ENCODE measurements at regions of chr13 and their contacts with region 1.

Region 1: DNA sequence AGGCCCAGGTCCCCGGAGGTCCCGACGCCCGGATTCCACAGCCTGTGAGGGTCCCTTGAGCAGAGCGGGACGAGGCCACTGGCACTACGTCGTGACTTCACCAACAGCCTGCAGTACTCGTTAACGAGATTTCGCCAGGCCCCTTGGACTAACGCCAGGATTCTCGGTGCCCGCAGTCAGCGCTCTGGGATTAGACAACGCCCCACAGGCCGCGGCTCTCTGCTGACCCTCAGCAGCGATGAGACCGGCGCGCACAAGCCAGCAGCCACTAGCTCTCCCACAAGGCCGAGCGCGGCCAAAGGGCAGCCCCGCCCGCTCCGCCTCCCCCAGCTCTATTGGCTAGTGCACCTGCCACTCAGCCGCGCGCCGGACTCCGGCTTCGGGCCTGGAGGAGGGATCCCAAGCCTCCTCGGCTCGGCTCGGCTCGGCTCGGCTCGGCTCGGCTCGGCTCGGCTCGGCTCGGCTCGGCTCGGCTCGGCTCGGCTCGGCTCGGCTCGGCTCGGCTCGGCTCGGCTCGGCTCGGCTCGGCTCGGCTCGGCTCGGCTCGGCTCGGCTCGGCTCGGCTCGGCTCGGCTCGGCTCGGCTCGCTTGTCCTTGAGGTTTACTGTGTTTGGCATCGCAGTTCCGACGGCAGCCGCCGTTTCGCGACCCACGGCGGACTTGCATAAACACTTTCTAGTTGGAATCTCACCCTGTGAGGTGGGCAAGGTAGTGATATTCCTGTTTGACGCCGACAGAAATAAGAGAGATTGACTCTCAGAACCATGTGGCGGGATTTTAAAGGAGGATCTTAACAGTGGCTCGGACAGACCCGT is 231.7 kb upstream of the SERP2 start:
- DNase-seq: peak; percentile 93 to 99
- H3K4me3 ChIP-seq: peak overlapping the region; percentile 68 to 72
- H3K27ac ChIP-seq: peak overlapping the region; percentile 95 to 96
- H3K4me1 ChIP-seq: peaks cover 3 to 8% of the 10 kb centered on the region in 2 donors
- H3K27me3 ChIP-seq: no peaks in the 10 kb centered on the region
- CTCF ChIP-seq: no peak

Region 2: DNA sequence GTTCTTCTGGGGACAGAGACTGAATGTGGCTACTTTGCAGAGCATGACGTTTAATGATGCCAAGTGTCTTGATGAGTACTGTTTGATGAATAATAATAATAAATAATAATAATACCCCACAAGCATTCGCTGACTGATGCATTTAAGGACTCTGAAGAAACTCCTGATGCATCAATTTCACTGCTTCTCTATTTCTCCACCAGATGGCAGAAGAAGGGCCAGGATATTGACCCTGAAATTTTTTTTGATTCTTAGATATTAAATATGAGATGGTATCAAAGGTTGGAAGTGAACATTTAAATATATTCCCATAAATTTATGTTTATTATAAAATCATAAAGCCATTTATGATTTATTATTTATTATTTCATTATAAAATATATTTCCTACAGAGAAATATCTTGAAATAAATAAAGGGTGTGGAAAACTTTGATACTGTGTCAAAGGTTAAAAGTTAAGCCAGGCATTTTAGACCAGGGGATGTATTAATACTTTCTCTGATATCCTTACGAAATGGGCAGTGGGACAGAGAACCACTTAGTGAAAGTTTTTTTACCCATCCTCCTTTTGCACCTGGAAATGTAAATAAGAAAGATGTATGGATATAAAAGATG is 91.4 kb before region 1 on chr13:
- intact Hi-C with region 1: loop called (anchors 5 kb)
- DNase-seq: no peak
- H3K4me3 ChIP-seq: no peak overlapping the region
- H3K27ac ChIP-seq: no peak overlapping the region
- H3K4me1 ChIP-seq: peaks cover 0 to 24% of the 10 kb centered on the region in 2 donors
- H3K27me3 ChIP-seq: no peaks in the 10 kb centered on the region
- CTCF ChIP-seq: peak; percentile 50 to 80 (median 78)

Region 3: GRCh38 chr13:44068737-44069136 is 73.2 kb before region 1 on chr13:
- intact Hi-C with region 1: loop called (anchors 1 kb)
- DNase-seq: no peak
- H3K4me3 ChIP-seq: peak overlapping the region in 1 of 2 donors; percentile 29
- H3K27ac ChIP-seq: peak overlapping the region in 1 of 2 donors; percentile 54
- H3K4me1 ChIP-seq: peaks cover 0 to 3% of the 10 kb centered on the region in 2 donors
- H3K27me3 ChIP-seq: no peaks in the 10 kb centered on the region
- CTCF ChIP-seq: no peak

Region 4: DNA sequence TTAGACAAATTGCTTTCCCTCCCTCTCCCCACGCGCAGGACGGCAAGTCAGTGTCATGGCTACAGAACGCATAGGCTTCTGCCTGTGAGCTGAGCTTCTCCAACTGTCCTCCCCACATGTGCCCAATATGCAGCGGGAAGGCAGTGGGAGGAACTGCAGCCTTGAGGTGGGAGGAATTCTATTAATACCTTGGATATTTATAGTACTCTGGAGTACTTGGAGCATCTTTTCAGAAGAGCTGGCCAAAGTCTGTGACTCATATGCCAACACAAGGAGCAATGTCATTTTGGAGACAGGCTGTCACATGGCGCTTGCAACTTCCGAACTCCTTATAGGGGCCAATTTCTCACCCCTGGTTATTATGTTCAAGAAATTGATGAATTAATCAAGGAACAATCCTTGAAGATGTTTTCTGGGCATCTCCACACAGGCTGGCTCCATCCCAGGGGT is 13.4 kb before region 1 on chr13:
- intact Hi-C with region 1: loop called (anchors 2 kb)
- DNase-seq: peak in 1 of 2 donors; percentile 68
- H3K4me3 ChIP-seq: peak overlapping the region in 1 of 2 donors; percentile 11
- H3K27ac ChIP-seq: no peak overlapping the region
- H3K4me1 ChIP-seq: peaks cover 3 to 15% of the 10 kb centered on the region in 2 donors
- H3K27me3 ChIP-seq: no peaks in the 10 kb centered on the region
- CTCF ChIP-seq: peak in 1 of 3 experiments; percentile 15

Region 5: GRCh38 chr13:44155422-44156293 is 13.7 kb after region 1 on chr13:
- intact Hi-C with region 1: loop called (anchors 1 kb)
- DNase-seq: peak in 1 of 2 donors; percentile 82
- H3K4me3 ChIP-seq: peak overlapping the region in 1 of 2 donors; percentile 39
- H3K27ac ChIP-seq: peak overlapping the region; percentile 79
- H3K4me1 ChIP-seq: peaks cover 5 to 50% of the 10 kb centered on the region in 2 donors
- H3K27me3 ChIP-seq: no peaks in the 10 kb centered on the region
- CTCF ChIP-seq: no peak

Region 6: DNA sequence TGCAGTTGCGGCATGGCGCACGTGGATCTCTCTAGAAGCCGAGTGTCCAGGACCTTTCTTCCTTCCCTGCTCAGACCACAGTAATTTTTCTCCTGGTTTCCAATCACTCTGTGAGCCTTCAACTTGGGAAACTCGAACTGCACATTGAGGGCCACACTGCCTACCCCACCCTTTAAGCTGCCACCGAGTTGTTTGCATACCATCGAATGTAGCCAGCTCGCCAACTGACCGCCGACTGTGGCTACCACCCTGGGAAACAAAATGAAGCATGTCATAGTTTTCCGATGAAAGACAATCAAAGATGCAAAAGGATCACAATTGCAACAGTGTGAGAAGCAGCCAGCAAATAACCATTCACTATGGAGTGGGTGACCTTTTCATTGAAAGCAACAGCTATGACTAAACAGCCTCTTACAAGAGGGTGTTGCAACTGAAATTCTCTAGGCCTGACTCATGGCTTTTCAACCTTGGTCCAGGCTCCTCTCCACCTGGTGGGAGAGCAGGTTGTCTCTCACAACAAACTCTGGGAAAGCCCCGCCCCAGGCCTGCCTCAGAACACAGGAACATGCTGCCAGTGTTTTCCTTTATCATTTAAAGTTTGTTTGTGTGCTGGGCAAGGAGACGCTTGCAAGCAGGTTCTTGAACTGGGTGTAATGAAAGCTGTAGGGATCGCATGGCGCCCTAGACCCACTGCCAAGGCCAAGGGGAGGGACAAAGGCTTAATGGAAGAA is 90.0 kb after region 1 on chr13:
- intact Hi-C with region 1: loop called (anchors 5 kb)
- DNase-seq: peak in 1 of 2 donors; percentile 84
- H3K4me3 ChIP-seq: no peak overlapping the region
- H3K27ac ChIP-seq: no peak overlapping the region
- H3K4me1 ChIP-seq: peaks cover 9 to 15% of the 10 kb centered on the region in 2 donors
- H3K27me3 ChIP-seq: no peaks in the 10 kb centered on the region
- CTCF ChIP-seq: no peak

Region 7: DNA sequence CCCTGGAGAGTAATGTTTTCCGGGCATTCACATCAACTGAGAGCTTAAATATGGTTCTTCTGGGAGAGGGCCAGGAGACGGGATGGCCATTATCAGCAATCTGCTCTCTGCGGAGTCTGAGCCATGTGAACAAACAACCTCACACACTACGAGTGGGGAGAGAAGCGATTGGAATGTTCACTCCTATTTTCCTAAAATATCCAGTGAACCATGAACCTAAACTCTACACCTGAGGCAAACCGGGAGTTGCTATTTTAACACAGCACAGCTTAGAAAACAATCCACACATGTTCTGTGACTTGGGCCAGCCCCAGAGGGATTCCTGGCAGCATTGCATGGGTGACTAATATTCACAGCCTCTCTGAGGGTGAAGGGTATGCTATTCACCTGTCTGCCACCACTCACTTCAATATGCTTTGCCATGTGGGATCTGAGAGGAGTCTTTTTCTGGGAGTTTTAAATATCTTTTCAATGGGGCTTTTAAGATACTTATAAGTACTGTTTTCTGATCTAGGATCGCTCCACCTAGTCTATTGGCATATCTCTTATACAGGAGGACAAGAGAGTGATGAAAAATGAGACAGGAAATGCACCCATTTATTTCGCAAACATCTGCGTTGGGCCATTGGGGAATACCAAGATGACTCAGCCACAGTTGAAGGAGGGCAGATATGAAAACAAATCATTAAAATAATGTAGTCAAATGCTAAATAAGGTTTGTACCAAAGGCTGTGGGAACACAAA is 159.1 kb after region 1 on chr13:
- intact Hi-C with region 1: loop called (anchors 5 kb)
- DNase-seq: peak; percentile 53 to 85
- H3K4me3 ChIP-seq: no peak overlapping the region
- H3K27ac ChIP-seq: peak overlapping the region; percentile 77 to 88
- H3K4me1 ChIP-seq: peaks cover 33 to 61% of the 10 kb centered on the region in 2 donors
- H3K27me3 ChIP-seq: no peaks in the 10 kb centered on the region
- CTCF ChIP-seq: no peak